GM13976 (cell line): ENCODE measurements at regions of chr18 and their contacts with region 1.

Region 1: DNA sequence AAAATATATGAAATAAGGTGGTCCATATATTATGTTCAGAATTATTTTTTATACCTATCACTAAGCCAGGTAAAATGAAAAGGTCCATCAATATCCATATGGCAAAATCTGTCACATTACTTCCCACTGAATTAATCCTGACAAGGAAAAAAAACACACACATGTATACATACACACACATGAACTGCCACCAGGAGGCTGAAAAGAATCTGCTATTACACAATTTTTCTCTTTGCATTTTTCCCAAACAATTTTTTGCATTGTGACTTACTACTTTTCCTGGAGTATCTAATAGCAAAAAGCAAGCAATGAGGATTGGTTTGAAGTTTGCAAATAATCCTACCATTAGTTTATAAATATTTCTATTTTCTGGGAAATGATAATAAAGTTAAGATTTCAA is 128.2 kb upstream of the CD226 start:
- DNase-seq: no peak
- CTCF ChIP-seq: no peak

Region 2: DNA sequence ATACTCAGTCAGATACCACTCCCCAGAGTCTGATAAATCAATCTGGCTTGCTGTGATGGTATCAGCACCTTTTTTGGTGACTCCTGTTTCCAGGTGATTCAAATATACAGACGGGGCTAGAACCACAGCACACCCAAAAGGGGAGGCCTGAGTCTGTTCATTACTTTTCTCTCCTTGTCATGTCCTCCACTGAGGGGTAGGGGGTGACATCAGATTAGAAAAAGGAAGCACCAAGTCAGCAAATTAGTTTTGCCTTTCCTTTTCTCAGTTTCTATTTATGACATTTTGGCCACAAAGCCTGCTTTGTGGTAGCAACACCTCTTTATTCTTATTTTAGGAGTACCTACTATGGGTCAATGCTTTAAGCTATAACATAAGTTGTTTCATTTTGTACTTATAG is 1150.6 kb before region 1 on chr18:
- in situ Hi-C with region 1: loop called (anchors 25 kb)
- DNase-seq: no peak
- CTCF ChIP-seq: peak; percentile 59

Region 3: GRCh38 chr18:69636529-69637301 is 439.2 kb before region 1 on chr18:
- in situ Hi-C with region 1: loop called (anchors 25 kb)
- DNase-seq: peak; percentile 8
- CTCF ChIP-seq: peak; percentile 19